ENCODE measurements at regions of chr6 and their contacts with region 1.

Region 1: GRCh38 chr6:143575440-143575839 is 63.9 kb upstream of the FUCA2 start:
- DNase-seq: peak; percentile 83
- ATAC-seq: peak; percentile 86
- H3K4me3 ChIP-seq: no peak overlapping the region
- H3K27ac ChIP-seq: no peak overlapping the region
- H3K4me1 ChIP-seq: no peaks in the 10 kb centered on the region
- H3K27me3 ChIP-seq: no peaks in the 10 kb centered on the region
- CTCF ChIP-seq: peak; percentile 94
- EP300 ChIP-seq: no peak
- POLR2A ChIP-seq: no peak
- RAD21 ChIP-seq: peak; percentile 95

Region 2: DNA sequence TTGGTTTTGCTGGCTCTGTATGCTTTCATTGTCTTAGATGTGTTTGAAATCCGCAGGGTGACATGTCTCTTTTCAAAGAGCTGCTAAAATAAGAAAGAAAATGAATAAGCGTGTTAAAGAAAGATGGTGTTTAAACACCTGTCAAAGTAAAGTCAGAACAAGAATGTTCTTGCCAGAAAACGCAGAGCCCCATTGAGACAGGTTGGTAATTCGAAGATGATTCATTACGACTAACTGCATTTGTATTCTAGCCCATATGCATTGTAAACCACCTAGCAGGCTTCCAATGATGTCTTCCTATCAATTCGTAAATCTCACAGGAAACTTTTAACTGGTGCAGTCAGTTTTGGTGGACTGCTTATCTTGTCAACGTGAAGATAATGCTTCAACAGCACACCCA is 119.1 kb after region 1 on chr6:
- CTCF ChIA-PET with region 1: no interaction called
- POLR2A ChIA-PET with region 1: no interaction called
- in situ Hi-C with region 1: no loop called
- intact Hi-C with region 1: loop called (anchors 5 kb)
- DNase-seq: no peak
- ATAC-seq: no peak
- H3K4me3 ChIP-seq: no peak overlapping the region
- H3K27ac ChIP-seq: no peak overlapping the region
- H3K4me1 ChIP-seq: peaks cover 95% of the 10 kb centered on the region
- H3K27me3 ChIP-seq: no peaks in the 10 kb centered on the region
- CTCF ChIP-seq: no peak
- EP300 ChIP-seq: no peak
- POLR2A ChIP-seq: no peak
- RAD21 ChIP-seq: no peak

Region 3: GRCh38 chr6:143940011-143940597 is 364.7 kb after region 1 on chr6:
- CTCF ChIA-PET with region 1: interaction called, 33 read pairs
- POLR2A ChIA-PET with region 1: no interaction called
- in situ Hi-C with region 1: loop called (anchors 5 kb)
- intact Hi-C with region 1: loop called (anchors 1 kb)
- DNase-seq: peak; percentile 59
- ATAC-seq: peak; percentile 74
- H3K4me3 ChIP-seq: no peak overlapping the region
- H3K27ac ChIP-seq: no peak overlapping the region
- H3K4me1 ChIP-seq: peaks cover 16% of the 10 kb centered on the region
- H3K27me3 ChIP-seq: no peaks in the 10 kb centered on the region
- CTCF ChIP-seq: peak; percentile 63
- EP300 ChIP-seq: no peak
- POLR2A ChIP-seq: no peak
- RAD21 ChIP-seq: peak; percentile 38; the same call in 1 of the 2 replicates

Region 4: GRCh38 chr6:144013486-144013909 is 438.1 kb after region 1 on chr6:
- CTCF ChIA-PET with region 1: interaction called, 53 read pairs
- POLR2A ChIA-PET with region 1: no interaction called
- in situ Hi-C with region 1: loop called (anchors 5 kb)
- intact Hi-C with region 1: loop called (anchors 1 kb)
- DNase-seq: peak; percentile 81
- ATAC-seq: peak; percentile 79
- H3K4me3 ChIP-seq: no peak overlapping the region
- H3K27ac ChIP-seq: no peak overlapping the region
- H3K4me1 ChIP-seq: 0 out of 2 replicates have a peak, but pooled peaks cover 2% of the 10 kb centered on the region
- H3K27me3 ChIP-seq: peaks cover 2% of the 10 kb centered on the region in 2 experiments; a peak in 3 of 5 replicates
- CTCF ChIP-seq: peak; percentile 95
- EP300 ChIP-seq: no peak
- POLR2A ChIP-seq: no peak
- RAD21 ChIP-seq: peak; percentile 94

Region 5: GRCh38 chr6:144482142-144482541 is 906.7 kb after region 1 on chr6:
- CTCF ChIA-PET with region 1: no interaction called
- POLR2A ChIA-PET with region 1: no interaction called
- in situ Hi-C with region 1: no loop called
- intact Hi-C with region 1: loop called (anchors 5 kb)
- DNase-seq: peak; percentile 69
- ATAC-seq: peak; percentile 80
- H3K4me3 ChIP-seq: no peak overlapping the region
- H3K27ac ChIP-seq: no peak overlapping the region
- H3K4me1 ChIP-seq: peaks cover 14% of the 10 kb centered on the region
- H3K27me3 ChIP-seq: no peaks in the 10 kb centered on the region
- CTCF ChIP-seq: peak; percentile 73
- EP300 ChIP-seq: no peak
- POLR2A ChIP-seq: no peak
- RAD21 ChIP-seq: no peak